BJ (cell line): ENCODE measurements at regions of chr10 and their contacts with region 1.

Region 1: GRCh38 chr10:103685880-103686669 is 169.3 kb downstream of the SH3PXD2A start:
- DNase-seq: no peak
- H3K4me3 ChIP-seq: no peak overlapping the region
- H3K27me3 ChIP-seq: no peaks in the 10 kb centered on the region
- CTCF ChIP-seq: peak; percentile 97

Region 2: GRCh38 chr10:103598654-103599115 is 87.4 kb before region 1 on chr10:
- CTCF ChIA-PET with region 1: interaction called, 98 read pairs
- POLR2A ChIA-PET with region 1: no interaction called
- DNase-seq: peak; percentile 31
- H3K4me3 ChIP-seq: no peak overlapping the region
- H3K27me3 ChIP-seq: no peaks in the 10 kb centered on the region
- CTCF ChIP-seq: peak; percentile 64

Region 3: GRCh38 chr10:103616705-103617601 is 69.1 kb before region 1 on chr10:
- CTCF ChIA-PET with region 1: interaction called, 24 read pairs
- POLR2A ChIA-PET with region 1: no interaction called
- DNase-seq: peak; percentile 86
- H3K4me3 ChIP-seq: no peak overlapping the region
- H3K27me3 ChIP-seq: no peaks in the 10 kb centered on the region
- CTCF ChIP-seq: no peak

Region 4: GRCh38 chr10:103659674-103660363 is 26.3 kb before region 1 on chr10:
- CTCF ChIA-PET with region 1: interaction called, 24 read pairs
- POLR2A ChIA-PET with region 1: no interaction called
- DNase-seq: peak; percentile 61
- H3K4me3 ChIP-seq: peak overlapping the region; percentile 81
- H3K27me3 ChIP-seq: no peaks in the 10 kb centered on the region
- CTCF ChIP-seq: peak; percentile 35

Region 5: DNA sequence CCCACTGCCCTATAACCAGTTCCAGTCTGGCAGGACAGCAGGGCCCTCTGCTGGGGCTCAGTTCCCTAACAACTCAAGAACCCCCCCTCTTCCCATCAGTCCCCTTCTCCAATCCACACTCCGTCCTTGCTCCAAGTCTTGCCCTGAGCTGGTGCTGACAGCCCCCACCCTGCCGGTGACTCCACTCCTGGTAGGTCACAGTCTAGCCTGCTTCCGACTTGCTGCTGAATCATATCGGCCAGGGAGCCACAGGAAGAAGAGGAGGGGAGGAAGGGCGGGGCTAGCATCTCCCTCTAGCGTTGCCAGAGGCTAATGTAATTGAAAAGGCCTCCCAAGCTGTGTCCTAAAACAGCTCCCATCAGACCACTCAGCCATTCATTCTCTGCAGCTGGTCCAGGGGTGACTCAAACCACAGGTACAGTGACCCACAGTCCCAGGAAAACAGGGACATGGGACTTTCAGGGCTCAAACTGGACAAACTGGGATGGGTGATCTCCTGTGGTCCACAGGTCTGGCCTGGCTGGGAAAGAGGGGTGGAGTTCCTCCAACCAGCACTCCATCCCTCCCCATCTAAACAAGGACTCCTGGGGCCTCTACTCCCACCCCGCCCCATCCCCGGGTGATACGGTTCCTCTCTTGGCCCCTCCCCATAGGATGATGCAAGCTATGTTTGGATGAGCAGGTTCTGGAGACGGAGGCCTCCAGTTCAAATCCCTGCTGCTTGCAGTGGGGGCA is 10.5 kb after region 1 on chr10:
- CTCF ChIA-PET with region 1: interaction called, 21 read pairs
- POLR2A ChIA-PET with region 1: no interaction called
- DNase-seq: peak; percentile 77
- H3K4me3 ChIP-seq: no peak overlapping the region
- H3K27me3 ChIP-seq: no peaks in the 10 kb centered on the region
- CTCF ChIP-seq: peak; percentile 71